ENCODE measurements at regions of chr5 and their contacts with region 1.

Region 1: DNA sequence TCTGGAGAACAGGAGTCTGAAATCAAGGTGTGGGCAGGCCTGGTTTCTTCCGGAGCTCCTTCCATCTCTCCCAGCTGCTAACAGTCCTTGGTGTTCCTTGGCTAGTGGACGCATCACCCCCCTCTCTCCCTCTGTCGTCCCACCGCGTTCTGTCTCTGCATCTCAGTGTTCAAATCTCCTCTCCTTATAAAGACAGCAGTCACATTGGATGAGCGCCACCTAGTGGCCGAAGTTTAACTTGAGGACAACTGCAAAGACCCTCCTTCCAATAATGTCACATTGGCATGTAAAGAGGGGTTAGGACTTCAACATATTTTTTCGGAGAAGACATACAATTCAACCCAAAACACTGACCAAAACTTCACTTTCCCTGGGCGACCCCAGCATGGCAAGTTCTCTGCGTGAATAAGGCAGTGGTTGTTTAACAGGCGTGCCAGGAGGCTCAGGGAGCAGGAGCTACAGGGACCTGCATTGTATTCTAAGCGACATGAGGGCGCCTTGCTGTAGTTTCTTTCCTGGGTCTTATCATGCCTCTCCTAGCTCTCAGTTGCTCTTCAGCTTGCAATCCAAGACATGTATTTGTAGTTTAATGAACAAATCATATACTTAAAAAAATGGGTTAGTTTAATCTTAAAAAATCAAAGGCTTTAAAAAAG is 27.9 kb upstream of the BASP1 start:
- DNase-seq: no peak
- H3K4me3 ChIP-seq: no peak overlapping the region
- CTCF ChIP-seq: peak; percentile 66

Region 2: GRCh38 chr5:16759147-16759773 is 430.2 kb before region 1 on chr5:
- CTCF ChIA-PET with region 1: interaction called, 25 read pairs
- POLR2A ChIA-PET with region 1: no interaction called
- DNase-seq: no peak
- H3K4me3 ChIP-seq: no peak overlapping the region
- CTCF ChIP-seq: no peak

Region 3: GRCh38 chr5:16809395-16810207 is 379.9 kb before region 1 on chr5:
- CTCF ChIA-PET with region 1: interaction called, 48 read pairs
- POLR2A ChIA-PET with region 1: no interaction called
- DNase-seq: peak; percentile 82
- H3K4me3 ChIP-seq: peak overlapping the region; percentile 42
- CTCF ChIP-seq: no peak

Region 4: DNA sequence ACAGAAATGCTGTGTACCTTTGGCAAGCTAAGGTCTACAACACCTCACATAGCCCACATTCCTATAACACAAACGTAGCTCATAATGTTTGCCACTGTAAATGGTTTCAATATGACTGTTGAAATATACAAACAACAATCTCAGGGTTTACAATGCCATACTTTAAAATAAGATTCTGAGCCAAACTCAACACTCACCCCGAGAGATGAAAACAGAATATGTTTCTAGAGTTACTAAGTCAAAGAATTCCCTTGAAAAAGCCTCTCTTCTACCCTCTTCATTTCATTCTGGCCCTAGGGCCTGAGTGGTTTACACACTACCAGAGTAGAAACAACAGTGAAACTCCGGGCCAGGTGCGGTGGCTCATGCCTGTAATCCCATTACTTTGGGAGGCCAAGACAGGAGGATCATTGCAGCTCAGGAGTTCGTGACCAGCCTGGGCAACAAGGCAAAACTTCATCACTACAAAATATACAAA is 326.0 kb before region 1 on chr5:
- CTCF ChIA-PET with region 1: interaction called, 14 read pairs
- POLR2A ChIA-PET with region 1: no interaction called
- DNase-seq: no peak
- H3K4me3 ChIP-seq: no peak overlapping the region
- CTCF ChIP-seq: no peak

Region 5: DNA sequence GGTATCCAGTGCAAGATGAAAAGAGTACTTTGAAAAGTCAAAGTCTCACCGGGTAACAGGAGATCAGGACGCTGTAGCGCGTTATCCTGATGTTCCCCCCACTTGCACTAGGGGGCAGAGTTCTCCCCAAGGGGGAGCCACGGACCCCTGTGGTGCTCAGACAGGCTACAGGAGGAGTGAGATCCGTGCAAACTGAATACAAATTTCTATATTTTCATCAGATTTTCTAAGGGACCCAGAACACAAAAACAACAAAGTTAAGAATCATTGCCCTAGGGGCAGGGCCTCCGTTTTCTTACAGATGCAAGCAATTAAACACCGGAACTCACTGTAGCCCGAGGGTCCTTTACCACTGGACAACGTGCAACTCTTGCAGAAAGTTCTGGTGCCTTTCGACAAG is 255.4 kb before region 1 on chr5:
- CTCF ChIA-PET with region 1: interaction called, 190 read pairs
- POLR2A ChIA-PET with region 1: interaction called, 6 read pairs
- DNase-seq: no peak
- H3K4me3 ChIP-seq: peak overlapping the region; percentile 67
- CTCF ChIP-seq: peak; percentile 93

Region 6: DNA sequence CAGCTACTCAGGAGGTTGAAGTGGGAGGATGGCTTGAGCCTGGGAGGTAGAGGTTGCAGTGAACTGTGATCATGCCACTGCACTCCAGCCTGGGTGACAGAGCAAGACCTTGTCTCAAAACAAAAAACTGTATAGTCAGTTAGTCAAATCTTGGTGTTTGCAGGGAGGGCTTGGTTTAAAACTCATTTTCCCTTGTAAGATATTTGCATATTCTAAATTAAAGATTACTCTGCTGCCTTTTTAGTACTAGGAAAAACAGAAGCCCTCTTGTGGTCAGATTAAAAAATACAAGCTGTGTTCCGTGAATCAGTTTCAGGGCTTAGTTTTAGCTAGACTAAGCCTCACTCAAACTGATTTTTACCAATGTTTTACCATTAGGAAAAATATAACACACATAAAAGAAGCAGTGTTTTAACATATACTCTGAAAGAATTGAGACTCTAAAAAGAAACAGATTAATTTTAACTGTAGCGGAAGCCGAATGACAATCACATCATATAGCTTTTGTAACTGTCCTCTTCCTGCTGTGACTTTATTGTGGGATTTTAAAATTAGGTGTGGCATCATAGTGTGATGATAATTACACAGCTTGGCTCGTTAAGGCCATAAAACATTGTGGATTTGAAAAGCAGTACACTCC is 56.9 kb before region 1 on chr5:
- CTCF ChIA-PET with region 1: interaction called, 62 read pairs
- POLR2A ChIA-PET with region 1: no interaction called
- DNase-seq: no peak
- H3K4me3 ChIP-seq: no peak overlapping the region
- CTCF ChIP-seq: peak; percentile 45